ENCODE measurements at regions of chr21 and their contacts with region 1.

Region 1: DNA sequence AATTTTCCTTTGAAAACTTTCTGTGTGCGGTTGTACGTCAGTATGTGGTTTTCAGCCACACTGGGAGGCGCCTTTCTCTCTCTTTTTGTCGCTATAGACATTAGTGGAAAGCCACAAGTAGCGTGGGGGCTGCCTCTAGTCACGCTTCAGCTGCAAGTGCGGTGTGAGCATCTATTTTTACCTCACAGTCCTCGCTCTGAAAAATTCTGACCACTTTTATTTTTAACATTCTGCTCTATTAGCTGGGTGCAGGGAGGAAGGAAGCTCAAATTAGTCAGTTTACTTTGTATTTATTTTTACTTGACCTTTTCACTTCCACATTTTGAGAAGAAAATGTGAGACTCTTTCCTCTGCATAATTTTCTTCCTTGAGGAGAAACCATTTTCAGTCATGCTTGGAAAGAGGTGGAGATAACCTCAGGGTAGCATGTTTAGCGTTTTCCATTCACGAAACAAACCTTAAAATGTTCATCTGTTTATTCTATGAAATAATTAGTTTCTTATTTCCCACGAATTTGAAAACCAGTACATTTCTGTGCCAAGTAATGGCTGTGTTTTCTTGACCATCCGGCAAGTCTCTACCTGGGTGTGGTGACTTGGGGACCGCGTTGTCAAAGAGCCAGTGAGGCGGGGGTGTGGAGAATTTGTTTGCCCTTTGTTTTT is 35.6 kb downstream of the ADARB1 start:
- DNase-seq: peak; percentile 90
- ATAC-seq: peak; percentile 83
- H3K4me3 ChIP-seq: peak overlapping the region; percentile 22 to 60 (median 42)
- H3K4me3 Mint-ChIP-seq: peak overlapping the region; percentile 78
- H3K27ac ChIP-seq: peak overlapping the region; percentile 83 to 94
- H3K27ac Mint-ChIP-seq: peak overlapping the region; percentile 75
- H3K4me1 ChIP-seq: peaks cover 91 to 94% of the 10 kb centered on the region in 2 donors
- H3K4me1 Mint-ChIP-seq: peaks cover 91% of the 10 kb centered on the region
- H3K27me3 ChIP-seq: no peaks in the 10 kb centered on the region
- H3K27me3 Mint-ChIP-seq: no peaks in the 10 kb centered on the region
- CTCF ChIP-seq: no peak

Region 2: DNA sequence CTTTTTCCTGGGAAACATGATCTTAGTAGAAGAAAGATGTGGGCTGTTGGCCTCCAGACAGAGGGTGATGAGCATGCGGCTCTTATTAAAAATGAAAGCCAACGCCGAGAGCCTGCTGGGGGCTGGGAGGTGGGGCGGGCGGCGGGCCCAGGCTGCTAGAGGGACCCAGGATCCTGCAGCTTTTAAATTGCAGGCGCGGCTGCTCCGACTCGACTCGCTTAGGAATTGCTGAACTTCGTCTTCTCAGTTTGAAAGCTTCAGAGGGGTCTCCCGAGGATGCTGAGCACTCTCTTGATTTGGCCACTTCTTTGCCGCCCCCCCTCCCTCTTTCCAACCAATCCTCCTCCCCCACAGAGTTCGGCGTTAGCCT is 1243.7 kb before region 1 on chr21:
- CTCF ChIA-PET with region 1: no interaction called
- POLR2A ChIA-PET with region 1: no interaction called
- intact Hi-C with region 1: loop called (anchors 5 kb)
- DNase-seq: peak; percentile 51
- ATAC-seq: peak; percentile 16
- H3K4me3 ChIP-seq: peak overlapping the region; percentile 32 to 78 (median 65)
- H3K4me3 Mint-ChIP-seq: peak overlapping the region; percentile 78
- H3K27ac ChIP-seq: peak overlapping the region; percentile 11 to 64
- H3K27ac Mint-ChIP-seq: peak overlapping the region; percentile 72
- H3K4me1 ChIP-seq: peaks cover 13 to 33% of the 10 kb centered on the region in 2 donors
- H3K4me1 Mint-ChIP-seq: peaks cover 41% of the 10 kb centered on the region
- H3K27me3 ChIP-seq: no peaks in the 10 kb centered on the region
- H3K27me3 Mint-ChIP-seq: no peaks in the 10 kb centered on the region
- CTCF ChIP-seq: no peak

Region 3: DNA sequence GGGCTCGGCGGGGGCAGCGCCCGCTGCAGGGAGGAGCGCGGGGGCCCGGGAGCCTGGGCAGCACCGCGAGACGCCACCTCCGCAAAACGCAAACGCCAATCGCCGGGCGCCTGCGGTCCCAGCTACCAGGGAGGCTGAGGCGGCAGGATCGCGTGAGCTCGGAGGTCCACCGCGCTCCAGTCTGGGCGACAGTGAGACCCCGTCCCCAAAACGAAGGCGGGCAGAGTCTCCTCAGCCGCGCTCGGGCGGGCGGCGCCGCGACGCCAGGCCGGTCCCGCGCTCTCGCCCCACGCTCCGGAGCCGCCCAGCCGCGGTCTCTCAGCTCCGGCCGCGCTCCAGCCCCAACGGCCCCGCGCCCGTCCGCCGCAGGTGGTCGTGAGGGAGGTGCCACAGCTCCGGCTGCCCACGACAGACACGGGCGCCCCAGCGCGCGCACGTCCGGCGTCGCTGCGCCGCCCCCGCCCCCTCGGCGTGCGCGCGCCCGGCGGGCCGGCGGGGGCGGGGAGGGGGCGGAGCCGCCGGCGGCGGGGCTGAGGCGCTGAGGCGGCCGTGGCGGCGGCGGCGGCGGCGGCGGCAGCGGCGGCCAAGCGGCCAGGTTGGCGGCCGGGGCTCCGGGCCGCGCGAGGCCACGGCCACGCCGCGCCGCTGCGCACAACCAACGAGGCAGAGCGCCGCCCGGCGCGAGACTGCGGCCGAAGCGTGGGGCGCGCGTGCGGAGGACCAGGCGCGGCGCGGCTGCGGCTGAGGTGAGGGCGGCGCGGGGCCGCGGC is 35.7 kb before region 1 on chr21 and contains the start of gene ADARB1:
- CTCF ChIA-PET with region 1: interaction called, 5 read pairs
- POLR2A ChIA-PET with region 1: no interaction called
- intact Hi-C with region 1: loop called (anchors 2 kb)
- DNase-seq: peak; percentile 84
- ATAC-seq: peak; percentile 87
- H3K4me3 ChIP-seq: peak within 1 kb of the TSS; percentile 69 to 86 (median 75)
- H3K4me3 Mint-ChIP-seq: peak within 1 kb of the TSS; percentile 90
- H3K27ac ChIP-seq: peak within 1 kb of the TSS in 1 of 2 donors; percentile 51
- H3K27ac Mint-ChIP-seq: peak within 1 kb of the TSS; percentile 84
- H3K4me1 ChIP-seq: peaks cover 37 to 44% of the 10 kb centered on the region in 2 donors
- H3K4me1 Mint-ChIP-seq: peaks cover 38% of the 10 kb centered on the region
- H3K27me3 ChIP-seq: no peaks in the 10 kb centered on the region
- H3K27me3 Mint-ChIP-seq: no peaks in the 10 kb centered on the region
- CTCF ChIP-seq: no peak
- total RNA-seq, gene ADARB1: 17.1 and 23.2 TPM in 2 replicates

Region 4: GRCh38 chr21:45120975-45121374 is 11.0 kb after region 1 on chr21:
- CTCF ChIA-PET with region 1: interaction called, 106 read pairs
- POLR2A ChIA-PET with region 1: interaction called, 4 read pairs
- intact Hi-C with region 1: no loop called
- DNase-seq: no peak
- ATAC-seq: no peak
- H3K4me3 ChIP-seq: no peak overlapping the region
- H3K4me3 Mint-ChIP-seq: no peak overlapping the region
- H3K27ac ChIP-seq: no peak overlapping the region
- H3K27ac Mint-ChIP-seq: no peak overlapping the region
- H3K4me1 ChIP-seq: peaks cover 72 to 78% of the 10 kb centered on the region in 2 donors
- H3K4me1 Mint-ChIP-seq: peaks cover 86% of the 10 kb centered on the region
- H3K27me3 ChIP-seq: no peaks in the 10 kb centered on the region
- H3K27me3 Mint-ChIP-seq: no peaks in the 10 kb centered on the region
- CTCF ChIP-seq: no peak

Region 5: DNA sequence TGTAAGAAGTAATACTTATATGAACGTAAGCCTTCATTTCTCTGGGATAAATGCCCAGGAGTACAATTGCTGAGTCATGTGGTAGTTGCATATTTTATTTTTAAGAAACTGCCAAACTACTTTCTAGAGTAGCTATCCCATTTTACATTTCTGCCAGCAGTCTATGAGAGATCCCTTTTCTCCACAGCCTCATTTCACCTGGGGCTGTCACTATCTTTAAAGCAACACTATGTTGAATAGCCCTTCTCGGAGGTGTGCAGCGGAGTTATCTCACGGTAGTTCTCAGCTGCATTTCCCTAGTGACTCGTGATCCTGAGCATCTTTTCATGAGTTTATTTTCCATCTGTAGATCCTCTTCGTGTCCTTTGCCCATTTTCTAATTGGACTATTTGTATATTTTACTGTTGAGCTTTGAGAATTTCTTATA is 57.8 kb after region 1 on chr21:
- CTCF ChIA-PET with region 1: no interaction called
- POLR2A ChIA-PET with region 1: no interaction called
- intact Hi-C with region 1: no loop called
- DNase-seq: no peak
- ATAC-seq: no peak
- H3K4me3 ChIP-seq: no peak overlapping the region
- H3K4me3 Mint-ChIP-seq: no peak overlapping the region
- H3K27ac ChIP-seq: no peak overlapping the region
- H3K27ac Mint-ChIP-seq: no peak overlapping the region
- H3K4me1 ChIP-seq: peaks cover 0 to 3% of the 10 kb centered on the region in 2 donors
- H3K4me1 Mint-ChIP-seq: peaks cover 6% of the 10 kb centered on the region
- H3K27me3 ChIP-seq: no peaks in the 10 kb centered on the region
- H3K27me3 Mint-ChIP-seq: no peaks in the 10 kb centered on the region
- CTCF ChIP-seq: no peak